ENCODE measurements at regions of chr3 and their contacts with region 1.

Region 1: GRCh38 chr3:151690645-151691044 is 43.1 kb upstream of the AADACL2 start:
- DNase-seq: no peak
- H3K4me3 ChIP-seq: no peak overlapping the region
- H3K27ac ChIP-seq: no peak overlapping the region
- H3K4me1 ChIP-seq: no peaks in the 10 kb centered on the region
- H3K27me3 ChIP-seq: no peaks in the 10 kb centered on the region
- CTCF ChIP-seq: no peak
- POLR2A ChIP-seq: no peak

Region 2: GRCh38 chr3:152177757-152178156 is 487.1 kb after region 1 on chr3:
- intact Hi-C with region 1: loop called (anchors 5 kb)
- DNase-seq: no peak
- H3K4me3 ChIP-seq: no peak overlapping the region
- H3K27ac ChIP-seq: no peak overlapping the region
- H3K4me1 ChIP-seq: no peaks in the 10 kb centered on the region
- H3K27me3 ChIP-seq: no peaks in the 10 kb centered on the region
- CTCF ChIP-seq: no peak
- POLR2A ChIP-seq: no peak

Measured in breast epithelium (tissue), 4 donors.